Activated CD4-positive, alpha-beta T cell treated with anti-CD3 and anti-CD28 coated beads, Interleukin-2, amount 10 ng/mL, durations not matched to agents 24 days and 14 days (primary cell): ENCODE measurements at regions of chr2 and their contacts with region 1.

Region 1: GRCh38 chr2:227655454-227655853 is 11.2 kb upstream of the SCYGR5 start:
- DNase-seq: no peak
- H3K4me3 Mint-ChIP-seq: no peak overlapping the region
- H3K27ac Mint-ChIP-seq: no peak overlapping the region
- H3K4me1 Mint-ChIP-seq: peaks cover 3% of the 10 kb centered on the region
- H3K27me3 Mint-ChIP-seq: peaks cover 11% of the 10 kb centered on the region

Region 2: GRCh38 chr2:227406177-227407031 is 249.1 kb before region 1 on chr2:
- intact Hi-C with region 1: loop called (anchors 10 kb)
- DNase-seq: peak; percentile 59
- H3K4me3 Mint-ChIP-seq: no peak overlapping the region
- H3K27ac Mint-ChIP-seq: peak overlapping the region; percentile 7
- H3K4me1 Mint-ChIP-seq: peaks cover 42% of the 10 kb centered on the region
- H3K27me3 Mint-ChIP-seq: no peaks in the 10 kb centered on the region

Region 3: DNA sequence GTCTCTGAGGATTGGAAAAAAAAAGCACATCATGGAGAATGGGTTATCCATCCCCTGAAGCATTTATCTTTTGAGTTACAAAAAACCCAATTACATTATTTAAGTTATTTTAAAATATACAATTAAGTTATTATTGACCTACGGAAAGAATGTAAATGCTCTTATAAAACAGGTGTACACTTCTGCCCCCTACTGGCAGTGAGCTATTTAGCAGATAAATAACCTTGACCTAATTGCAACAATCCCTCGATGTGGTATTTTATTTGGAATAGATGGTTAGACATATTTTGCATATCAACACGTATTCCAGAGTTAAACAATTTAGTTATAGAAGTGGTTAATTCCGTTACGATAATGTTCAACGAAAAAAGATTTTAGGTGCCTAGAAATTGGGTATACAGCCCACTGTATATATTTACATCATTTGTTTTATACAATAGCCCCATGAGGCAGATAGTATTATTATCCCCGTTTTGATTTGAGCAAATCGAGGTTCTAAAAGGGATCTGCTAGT is 206.8 kb after region 1 on chr2:
- intact Hi-C with region 1: loop called (anchors 1 kb)
- DNase-seq: peak; percentile 69
- H3K4me3 Mint-ChIP-seq: no peak overlapping the region
- H3K27ac Mint-ChIP-seq: no peak overlapping the region
- H3K4me1 Mint-ChIP-seq: no peaks in the 10 kb centered on the region
- H3K27me3 Mint-ChIP-seq: no peaks in the 10 kb centered on the region

Region 4: GRCh38 chr2:227884511-227884947 is 229.1 kb after region 1 on chr2:
- intact Hi-C with region 1: loop called (anchors 1 kb)
- DNase-seq: peak; percentile 85
- H3K4me3 Mint-ChIP-seq: no peak overlapping the region
- H3K27ac Mint-ChIP-seq: no peak overlapping the region
- H3K4me1 Mint-ChIP-seq: peaks cover 1% of the 10 kb centered on the region
- H3K27me3 Mint-ChIP-seq: peaks cover 7% of the 10 kb centered on the region